Heart left ventricle (tissue), 16 donors: ENCODE measurements at regions of chr9 and their contacts with region 1.

Region 1: GRCh38 chr9:112074250-112075008 is 100.7 kb downstream of the SUSD1 start:
- DNase-seq: peak in 4 of 5 donors; percentile 57 to 68 (median 62)
- ATAC-seq: peak; percentile 78 to 90 (median 83)
- H3K4me3 ChIP-seq: peak overlapping the region in 4 of 12 donors; percentile 9 to 29 (median 15)
- H3K27ac ChIP-seq: peak overlapping the region in 11 of 12 donors; percentile 3 to 96 (median 72)
- H3K4me1 ChIP-seq: peaks cover 0 to 85% (median 13%) of the 10 kb centered on the region in 12 donors
- H3K27me3 ChIP-seq: no peaks in the 10 kb centered on the region
- CTCF ChIP-seq: peak; percentile 81 to 98 (median 91)
- POLR2A ChIP-seq: no peak

Region 2: GRCh38 chr9:111631071-111631971 is 443.1 kb before region 1 on chr9 and contains the start of gene DNAJC25:
- intact Hi-C with region 1: loop called in 1 of 10 experiments (anchors 10 kb)
- DNase-seq: peak; percentile 96 to 98 (median 98)
- ATAC-seq: peak; percentile 99 to 100 (median 100)
- H3K4me3 ChIP-seq: peak within 1 kb of the TSS; percentile 84 to 99 (median 93)
- H3K27ac ChIP-seq: peak within 1 kb of the TSS; percentile 41 to 94 (median 87)
- H3K4me1 ChIP-seq: peaks cover 3 to 51% (median 25%) of the 10 kb centered on the region in 12 donors
- H3K27me3 ChIP-seq: no peaks in the 10 kb centered on the region
- CTCF ChIP-seq: peak in 2 of 12 donors; percentile 8 to 11
- POLR2A ChIP-seq: peak; percentile 99 to 100
- total RNA-seq, gene DNAJC25: 3.9 to 7.3 (median 5.0) TPM

Region 3: GRCh38 chr9:111759762-111760639 is 314.4 kb before region 1 on chr9:
- intact Hi-C with region 1: loop called (anchors 1 to 2 kb)
- DNase-seq: peak in 2 of 5 donors; percentile 48 to 50
- ATAC-seq: peak in 3 of 4 donors; percentile 88 to 91 (median 90)
- H3K4me3 ChIP-seq: no peak overlapping the region
- H3K27ac ChIP-seq: peak overlapping the region in 1 of 12 donors; percentile 39
- H3K4me1 ChIP-seq: peaks cover 0 to 8% (median 0%) of the 10 kb centered on the region in 12 donors
- H3K27me3 ChIP-seq: no peaks in the 10 kb centered on the region
- CTCF ChIP-seq: peak; percentile 53 to 81 (median 72)
- POLR2A ChIP-seq: no peak

Region 4: DNA sequence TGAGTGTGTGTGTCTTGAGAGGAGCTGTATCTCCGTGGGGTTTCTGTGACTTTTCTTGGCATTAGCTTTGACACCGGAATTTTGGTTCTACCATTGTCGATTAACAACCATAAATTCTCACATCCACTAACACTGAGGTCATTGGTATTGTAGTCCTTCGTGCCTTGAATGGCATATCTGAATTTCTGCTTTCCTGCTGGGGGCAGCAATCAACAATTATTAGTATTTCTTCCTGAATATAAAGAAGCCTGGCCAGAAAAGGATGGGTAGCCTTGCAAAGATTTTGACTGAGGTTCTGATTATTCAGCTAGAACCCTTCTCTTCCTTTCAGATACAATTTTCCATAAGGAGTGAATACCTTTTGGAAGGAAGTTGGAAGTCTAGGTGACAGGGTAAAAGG is 246.2 kb before region 1 on chr9:
- intact Hi-C with region 1: loop called in 3 of 10 experiments (anchors 1 to 10 kb)
- DNase-seq: no peak
- ATAC-seq: no peak
- H3K4me3 ChIP-seq: no peak overlapping the region
- H3K27ac ChIP-seq: no peak overlapping the region
- H3K4me1 ChIP-seq: no peaks in the 10 kb centered on the region
- H3K27me3 ChIP-seq: no peaks in the 10 kb centered on the region
- CTCF ChIP-seq: peak in 4 of 12 donors; percentile 9 to 31 (median 13)
- POLR2A ChIP-seq: no peak

Region 5: GRCh38 chr9:111839388-111839787 is 235.0 kb before region 1 on chr9:
- intact Hi-C with region 1: loop called in 1 of 10 experiments (anchors 10 kb)
- DNase-seq: peak in 1 of 5 donors; percentile 34
- ATAC-seq: peak in 2 of 4 donors; percentile 10 to 45
- H3K4me3 ChIP-seq: no peak overlapping the region
- H3K27ac ChIP-seq: no peak overlapping the region
- H3K4me1 ChIP-seq: peaks cover 0 to 25% (median 0%) of the 10 kb centered on the region in 12 donors
- H3K27me3 ChIP-seq: no peaks in the 10 kb centered on the region
- CTCF ChIP-seq: no peak
- POLR2A ChIP-seq: no peak